ENCODE measurements at regions of chr7 and their contacts with region 1.

Region 1: GRCh38 chr7:100049441-100050311 is at the start of gene ZSCAN21:
- DNase-seq: peak; percentile 86 to 89
- ATAC-seq: peak; percentile 89 to 93 (median 90)
- H3K4me3 ChIP-seq: peak within 1 kb of the TSS; percentile 84
- H3K4me3 Mint-ChIP-seq: peak within 1 kb of the TSS; percentile 91
- H3K27ac ChIP-seq: peak within 1 kb of the TSS; percentile 82
- H3K27ac Mint-ChIP-seq: peak within 1 kb of the TSS; percentile 89 to 92
- H3K4me1 ChIP-seq: peaks cover 17% of the 10 kb centered on the region
- H3K4me1 Mint-ChIP-seq: peaks cover 13 to 18% of the 10 kb centered on the region in 2 donors
- H3K27me3 ChIP-seq: no peaks in the 10 kb centered on the region
- H3K27me3 Mint-ChIP-seq: no peaks in the 10 kb centered on the region
- CTCF ChIP-seq: peak; percentile 12
- total RNA-seq, gene ZSCAN21: 6.2 to 8.9 (median 7.2) TPM

Region 2: DNA sequence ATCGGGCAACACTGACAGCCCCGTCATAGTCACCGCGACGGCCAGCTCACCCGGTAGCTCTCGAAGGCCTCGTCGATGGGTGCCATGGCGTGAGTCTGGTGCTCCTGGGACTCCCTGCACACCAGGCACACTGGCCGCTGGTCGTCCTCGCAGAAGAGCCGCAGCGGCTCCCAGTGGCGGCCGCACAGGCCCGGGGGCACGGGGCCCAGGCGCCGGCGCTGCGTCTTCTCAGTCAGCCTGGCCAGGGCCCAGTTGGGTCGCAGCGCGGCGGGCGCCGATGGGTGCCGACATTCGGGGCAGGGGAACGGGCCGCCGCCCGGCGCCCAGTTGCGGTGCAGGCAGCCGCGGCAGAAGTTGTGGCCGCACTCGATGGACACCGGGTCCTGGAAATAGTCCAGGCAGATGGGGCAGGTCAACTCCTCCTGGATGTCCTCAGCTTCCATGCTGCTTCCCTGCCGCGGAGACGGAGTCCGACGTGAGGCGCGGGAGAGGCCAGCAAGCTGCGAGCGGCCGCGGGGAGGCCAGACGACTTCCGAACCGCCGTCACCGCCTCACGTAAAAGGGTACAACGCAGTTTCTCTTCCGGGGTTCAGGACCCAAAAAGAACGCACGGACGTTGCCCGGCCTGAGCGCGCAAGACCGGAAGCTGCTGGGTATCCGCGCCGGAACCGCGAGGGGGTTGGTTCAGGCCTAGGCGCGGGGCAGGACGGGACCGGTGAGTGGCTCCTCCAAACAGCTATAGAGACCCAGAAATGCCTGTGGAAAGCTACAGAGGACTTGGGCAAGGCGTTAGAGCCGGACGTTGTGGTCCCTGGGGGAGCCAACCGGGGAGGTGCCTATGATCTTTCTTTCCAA is 130.5 kb before region 1 on chr7 and contains the start of gene TRIM4:
- intact Hi-C with region 1: loop called (anchors 10 kb)
- DNase-seq: peak; percentile 82 to 94
- ATAC-seq: peak; percentile 95 to 98 (median 96)
- H3K4me3 ChIP-seq: peak within 1 kb of the TSS; percentile 63
- H3K4me3 Mint-ChIP-seq: peak within 1 kb of the TSS; percentile 91
- H3K27ac ChIP-seq: peak within 1 kb of the TSS; percentile 90
- H3K27ac Mint-ChIP-seq: peak within 1 kb of the TSS; percentile 91 to 95
- H3K4me1 ChIP-seq: peaks cover 23% of the 10 kb centered on the region
- H3K4me1 Mint-ChIP-seq: peaks cover 36 to 57% of the 10 kb centered on the region in 2 donors
- H3K27me3 ChIP-seq: no peaks in the 10 kb centered on the region
- H3K27me3 Mint-ChIP-seq: no peaks in the 10 kb centered on the region
- CTCF ChIP-seq: no peak
- total RNA-seq, gene TRIM4: 16.8 to 28.1 (median 22.4) TPM

Region 3: DNA sequence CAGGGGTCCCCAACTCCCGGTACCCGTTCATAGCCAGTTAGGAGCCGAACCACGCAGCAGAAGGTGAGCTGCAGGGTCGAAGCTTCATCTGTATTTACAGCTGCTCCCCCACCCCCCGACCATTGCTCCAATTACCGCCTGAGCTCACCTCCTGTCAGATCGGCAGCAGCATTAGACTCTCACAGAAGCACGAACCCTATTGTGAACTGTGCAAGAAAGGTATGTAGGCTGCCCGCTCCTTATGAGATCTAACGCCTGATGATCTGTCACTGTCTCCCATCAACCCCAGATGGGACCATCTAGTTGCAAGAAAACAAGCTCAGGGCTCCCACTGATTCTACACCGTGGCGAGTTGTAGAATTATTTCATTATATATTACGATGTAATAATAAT is 59.2 kb before region 1 on chr7:
- intact Hi-C with region 1: loop called (anchors 5 kb)
- DNase-seq: no peak
- ATAC-seq: peak in 2 of 3 donors; percentile 10 to 13
- H3K4me3 ChIP-seq: no peak overlapping the region
- H3K4me3 Mint-ChIP-seq: no peak overlapping the region
- H3K27ac ChIP-seq: no peak overlapping the region
- H3K27ac Mint-ChIP-seq: no peak overlapping the region
- H3K4me1 ChIP-seq: peaks cover 5% of the 10 kb centered on the region
- H3K4me1 Mint-ChIP-seq: no peaks in the 10 kb centered on the region
- H3K27me3 ChIP-seq: no peaks in the 10 kb centered on the region
- H3K27me3 Mint-ChIP-seq: peaks cover 0 to 10% of the 10 kb centered on the region in 2 donors
- CTCF ChIP-seq: no peak

Region 4: GRCh38 chr7:100101016-100101862 is 51.6 kb after region 1 on chr7 and contains the starts of genes AP4M1 and MCM7:
- intact Hi-C with region 1: loop called (anchors 1 kb)
- DNase-seq: peak; percentile 97
- ATAC-seq: peak; percentile 79 to 93 (median 81)
- H3K4me3 ChIP-seq: peak within 1 kb of the TSS; percentile 98
- H3K4me3 Mint-ChIP-seq: peak within 1 kb of the TSS; percentile 95
- H3K27ac ChIP-seq: peak within 1 kb of the TSS; percentile 93
- H3K27ac Mint-ChIP-seq: peak within 1 kb of the TSS; percentile 96 to 98
- H3K4me1 ChIP-seq: peaks cover 28% of the 10 kb centered on the region
- H3K4me1 Mint-ChIP-seq: peaks cover 36 to 43% of the 10 kb centered on the region in 2 donors
- H3K27me3 ChIP-seq: no peaks in the 10 kb centered on the region
- H3K27me3 Mint-ChIP-seq: no peaks in the 10 kb centered on the region
- CTCF ChIP-seq: no peak
- total RNA-seq, gene AP4M1: 8.4 to 12.8 (median 12.7) TPM
- total RNA-seq, gene MCM7: 112 to 214 (median 137) TPM